ENCODE measurements at regions of chr1 and their contacts with region 1.

Region 1: DNA sequence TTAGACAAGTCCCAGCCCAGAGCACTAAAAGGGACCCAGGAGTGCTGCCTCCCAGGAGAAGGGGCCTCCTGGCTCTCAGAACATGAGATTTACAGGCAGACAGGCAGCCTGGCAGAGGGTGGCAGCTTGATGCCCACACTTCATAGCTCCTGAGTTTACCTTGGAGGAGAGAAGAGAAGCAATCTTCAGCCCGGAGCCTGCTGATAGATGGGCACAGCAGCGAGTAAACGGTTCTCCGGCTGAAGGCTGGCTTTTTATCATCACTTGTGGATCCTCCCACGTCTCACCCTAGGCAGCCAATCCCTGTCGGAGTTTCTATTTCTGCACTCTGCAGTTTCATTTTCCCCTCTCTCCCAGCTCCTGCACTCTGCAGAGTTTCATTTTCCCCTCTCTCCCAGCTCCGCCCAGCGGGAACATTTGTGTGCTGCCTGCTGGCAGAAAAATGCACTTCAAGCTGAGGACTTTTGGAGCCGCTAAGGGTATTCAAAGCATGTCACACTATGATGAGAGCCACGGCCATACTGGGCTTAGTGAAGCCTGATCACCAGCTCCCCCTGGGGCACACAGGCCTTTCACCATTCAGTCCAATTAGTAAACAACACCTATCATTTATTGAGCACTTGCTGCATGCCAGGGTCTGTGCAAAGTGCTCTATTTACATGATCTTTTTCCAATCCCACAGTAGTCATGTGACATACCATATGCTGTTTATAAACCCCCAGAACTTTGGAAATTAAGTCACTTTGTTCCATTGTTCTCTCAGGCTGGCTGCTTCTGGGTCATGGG is at the start of gene IFI6:
- DNase-seq: peak; percentile 42 to 86 (median 81)
- ATAC-seq: peak; percentile 94
- H3K4me3 ChIP-seq: peak within 1 kb of the TSS; percentile 50
- H3K4me3 Mint-ChIP-seq: peak within 1 kb of the TSS; percentile 89 to 98 (median 94)
- H3K27ac ChIP-seq: peak within 1 kb of the TSS; percentile 87
- H3K27ac Mint-ChIP-seq: peak within 1 kb of the TSS; percentile 90 to 99 (median 94)
- H3K4me1 ChIP-seq: peaks cover 21 to 23% of the 10 kb centered on the region in 2 donors
- H3K4me1 Mint-ChIP-seq: peaks cover 16 to 43% (median 41%) of the 10 kb centered on the region in 7 donors
- H3K27me3 ChIP-seq: no peaks in the 10 kb centered on the region
- H3K27me3 Mint-ChIP-seq: peaks cover 0 to 2% (median 0%) of the 10 kb centered on the region in 5 donors
- total RNA-seq, gene IFI6: 24.7 to 266 (median 33.2) TPM

Region 2: GRCh38 chr1:27097484-27097917 is 574.7 kb before region 1 on chr1:
- CTCF ChIA-PET with region 1: no interaction called
- POLR2A ChIA-PET with region 1: no interaction called
- intact Hi-C with region 1: no loop called
- DNase-seq: peak; percentile 49 to 79 (median 63)
- ATAC-seq: peak; percentile 83
- H3K4me3 ChIP-seq: no peak overlapping the region
- H3K4me3 Mint-ChIP-seq: no peak overlapping the region
- H3K27ac ChIP-seq: no peak overlapping the region
- H3K27ac Mint-ChIP-seq: no peak overlapping the region
- H3K4me1 ChIP-seq: no peaks in the 10 kb centered on the region
- H3K4me1 Mint-ChIP-seq: peaks cover 0 to 18% (median under 1%) of the 10 kb centered on the region in 7 donors
- H3K27me3 ChIP-seq: no peaks in the 10 kb centered on the region
- H3K27me3 Mint-ChIP-seq: no peaks in the 10 kb centered on the region

Region 3: DNA sequence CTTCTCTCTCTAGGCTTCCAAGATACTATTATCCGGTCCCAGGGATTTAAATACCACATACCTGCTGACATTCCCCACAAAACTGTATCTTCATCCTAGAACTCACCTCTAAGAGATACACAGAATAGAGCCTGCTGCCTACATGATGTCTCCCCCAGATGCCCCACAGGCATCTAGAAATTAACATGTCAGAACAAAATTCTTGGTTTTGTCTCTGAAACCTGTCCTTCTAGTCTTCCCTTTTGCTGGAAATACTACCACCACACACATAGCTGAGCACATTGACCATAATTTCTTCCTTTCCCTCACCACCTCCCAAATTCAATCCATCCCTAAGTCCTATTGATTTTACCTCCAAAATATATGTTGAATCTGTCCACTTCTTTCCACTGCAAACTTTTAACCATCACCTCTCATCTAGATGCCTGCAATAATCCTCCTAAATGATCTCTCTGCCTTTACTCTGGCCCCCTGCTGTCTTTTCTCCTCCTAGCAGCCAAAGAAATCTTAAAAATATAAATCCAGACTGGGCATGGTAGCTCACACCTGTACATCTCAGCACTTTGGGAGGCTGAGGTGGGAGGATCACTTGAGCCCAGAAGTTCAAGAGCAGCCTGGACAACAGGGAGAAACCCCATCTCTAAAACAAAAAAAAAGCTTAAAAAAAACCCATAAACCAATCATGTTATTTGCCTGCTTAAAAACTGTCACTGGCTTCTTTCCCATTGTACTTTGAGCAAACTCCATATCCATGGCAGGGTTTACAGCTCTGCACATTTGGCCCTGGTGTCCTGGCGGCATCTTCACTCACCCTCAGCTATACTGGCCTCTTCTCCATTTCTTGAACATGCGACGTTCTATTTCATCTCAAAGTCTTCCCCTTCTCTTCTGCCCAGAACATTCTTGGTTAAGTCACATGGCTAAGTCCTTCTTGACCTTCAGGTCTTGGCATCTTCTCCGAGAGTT is 47.4 kb after region 1 on chr1:
- CTCF ChIA-PET with region 1: interaction called, 12 read pairs
- POLR2A ChIA-PET with region 1: interaction called, 15 read pairs
- intact Hi-C with region 1: loop called in 1 of 2 experiments (anchors 1 kb)
- DNase-seq: peak in 4 of 9 donors; percentile 13 to 29 (median 14)
- ATAC-seq: peak; percentile 45
- H3K4me3 ChIP-seq: no peak overlapping the region
- H3K4me3 Mint-ChIP-seq: no peak overlapping the region
- H3K27ac ChIP-seq: no peak overlapping the region
- H3K27ac Mint-ChIP-seq: peak overlapping the region in 1 of 9 donors; percentile 28
- H3K4me1 ChIP-seq: peaks cover 0 to 2% of the 10 kb centered on the region in 2 donors
- H3K4me1 Mint-ChIP-seq: peaks cover 0 to 2% (median 1%) of the 10 kb centered on the region in 7 donors
- H3K27me3 ChIP-seq: no peaks in the 10 kb centered on the region
- H3K27me3 Mint-ChIP-seq: peaks cover 6 to 31% (median 17%) of the 10 kb centered on the region in 5 donors

Region 4: DNA sequence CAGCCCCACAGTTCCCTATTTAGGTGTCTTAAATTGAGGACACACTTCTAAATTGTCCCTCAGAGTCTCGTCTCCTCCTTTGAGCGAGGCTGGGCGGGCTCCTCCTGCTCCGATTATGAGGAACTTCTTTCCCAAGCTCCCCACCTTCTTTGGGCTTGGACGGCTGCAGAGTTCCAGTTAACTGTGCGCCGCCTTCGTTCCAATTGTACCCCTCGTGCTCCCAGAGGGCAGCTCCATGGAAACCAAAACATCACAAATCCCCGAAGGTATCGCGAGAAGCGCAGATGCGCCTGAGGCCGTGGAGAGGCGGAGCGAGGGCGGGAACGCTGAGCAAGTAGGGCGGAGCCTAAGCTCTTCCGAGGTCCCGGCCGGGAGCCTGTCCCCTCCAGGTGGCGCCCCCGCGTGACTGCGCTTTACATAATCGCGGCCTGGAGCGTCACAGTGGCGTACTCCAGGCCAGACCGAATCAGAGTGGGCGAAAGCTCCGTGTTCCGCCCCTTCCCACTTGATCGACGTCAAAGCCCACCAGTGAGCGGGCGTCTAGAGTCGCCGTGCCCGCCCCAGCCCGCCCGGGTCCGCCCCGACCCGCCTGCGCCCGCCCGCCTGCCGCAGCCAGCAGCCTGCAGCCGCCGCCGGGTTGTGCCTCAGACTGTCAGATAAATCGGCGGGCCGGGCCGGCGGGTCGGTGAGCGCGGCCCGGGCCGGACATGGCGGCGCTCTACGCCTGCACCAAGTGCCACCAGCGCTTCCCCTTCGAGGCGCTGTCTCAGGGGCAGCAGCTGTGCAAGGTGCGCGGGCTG is 53.4 kb after region 1 on chr1 and contains the start of gene FAM76A:
- CTCF ChIA-PET with region 1: interaction called, 12 read pairs
- POLR2A ChIA-PET with region 1: interaction called, 15 read pairs
- intact Hi-C with region 1: loop called (anchors 1 kb)
- DNase-seq: peak; percentile 97 to 100 (median 99)
- ATAC-seq: peak; percentile 97
- H3K4me3 ChIP-seq: peak within 1 kb of the TSS; percentile 77
- H3K4me3 Mint-ChIP-seq: peak within 1 kb of the TSS; percentile 86 to 93 (median 90)
- H3K27ac ChIP-seq: peak within 1 kb of the TSS; percentile 91
- H3K27ac Mint-ChIP-seq: peak within 1 kb of the TSS; percentile 93 to 100 (median 98)
- H3K4me1 ChIP-seq: peaks cover 7 to 17% of the 10 kb centered on the region in 2 donors
- H3K4me1 Mint-ChIP-seq: peaks cover 9 to 35% (median 28%) of the 10 kb centered on the region in 7 donors
- H3K27me3 ChIP-seq: no peaks in the 10 kb centered on the region
- H3K27me3 Mint-ChIP-seq: no peaks in the 10 kb centered on the region
- total RNA-seq, gene FAM76A: 15.2 to 25.2 (median 22.2) TPM

Region 5: DNA sequence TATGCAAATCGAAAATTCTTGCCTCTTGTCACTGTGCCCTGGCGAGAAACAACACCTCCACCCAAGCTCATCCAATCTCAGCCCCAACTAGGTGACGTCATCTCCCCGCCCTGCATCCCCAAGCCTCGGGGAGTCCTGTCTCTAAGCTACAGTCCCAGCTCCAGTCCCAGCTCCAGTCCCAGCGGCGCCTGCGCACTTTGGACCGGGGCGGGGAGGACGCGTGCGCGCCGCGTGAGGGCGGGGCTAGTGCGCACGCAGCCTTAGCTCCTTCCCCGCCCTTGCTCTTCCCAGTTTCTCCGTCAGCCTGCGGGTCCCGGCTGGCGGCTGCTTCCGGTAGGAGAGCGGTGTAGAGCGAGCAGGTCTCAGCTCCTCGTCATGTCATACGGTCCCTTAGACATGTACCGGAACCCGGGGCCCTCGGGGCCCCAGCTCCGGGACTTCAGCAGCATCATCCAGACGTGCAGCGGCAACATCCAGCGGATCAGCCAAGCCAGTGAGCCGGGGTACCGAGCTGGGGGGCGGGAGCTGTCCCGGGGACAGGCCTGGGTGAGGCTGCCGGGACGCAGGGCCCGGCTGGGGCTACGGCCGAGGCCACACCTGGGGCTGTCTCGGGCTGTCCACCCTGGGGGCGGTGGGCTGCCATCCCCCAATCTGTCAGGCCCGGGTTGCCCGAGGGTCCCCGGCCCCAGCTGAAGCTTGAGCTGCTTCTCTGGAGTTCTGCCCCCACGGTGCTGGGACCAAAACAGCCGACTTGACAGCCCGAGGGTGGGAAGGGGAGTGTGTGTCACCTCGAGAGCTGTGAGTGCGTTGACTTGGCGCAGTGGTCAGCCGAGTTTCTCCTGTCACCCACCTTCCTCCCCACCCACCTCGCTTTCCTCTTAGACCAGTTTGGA is 101.0 kb after region 1 on chr1 and contains the start of gene STX12:
- CTCF ChIA-PET with region 1: interaction called, 8 read pairs
- POLR2A ChIA-PET with region 1: interaction called, 9 read pairs
- intact Hi-C with region 1: loop called (anchors 1 kb)
- DNase-seq: peak; percentile 97 to 100 (median 98)
- ATAC-seq: peak; percentile 96
- H3K4me3 ChIP-seq: peak within 1 kb of the TSS; percentile 97
- H3K4me3 Mint-ChIP-seq: peak within 1 kb of the TSS; percentile 84 to 97 (median 94)
- H3K27ac ChIP-seq: peak within 1 kb of the TSS; percentile 94
- H3K27ac Mint-ChIP-seq: peak within 1 kb of the TSS; percentile 90 to 99 (median 96)
- H3K4me1 ChIP-seq: peaks cover 10 to 13% of the 10 kb centered on the region in 2 donors
- H3K4me1 Mint-ChIP-seq: peaks cover 26 to 43% (median 37%) of the 10 kb centered on the region in 7 donors
- H3K27me3 ChIP-seq: no peaks in the 10 kb centered on the region
- H3K27me3 Mint-ChIP-seq: no peaks in the 10 kb centered on the region
- total RNA-seq, gene STX12: 23.9 to 38.7 (median 28.9) TPM

Region 6: DNA sequence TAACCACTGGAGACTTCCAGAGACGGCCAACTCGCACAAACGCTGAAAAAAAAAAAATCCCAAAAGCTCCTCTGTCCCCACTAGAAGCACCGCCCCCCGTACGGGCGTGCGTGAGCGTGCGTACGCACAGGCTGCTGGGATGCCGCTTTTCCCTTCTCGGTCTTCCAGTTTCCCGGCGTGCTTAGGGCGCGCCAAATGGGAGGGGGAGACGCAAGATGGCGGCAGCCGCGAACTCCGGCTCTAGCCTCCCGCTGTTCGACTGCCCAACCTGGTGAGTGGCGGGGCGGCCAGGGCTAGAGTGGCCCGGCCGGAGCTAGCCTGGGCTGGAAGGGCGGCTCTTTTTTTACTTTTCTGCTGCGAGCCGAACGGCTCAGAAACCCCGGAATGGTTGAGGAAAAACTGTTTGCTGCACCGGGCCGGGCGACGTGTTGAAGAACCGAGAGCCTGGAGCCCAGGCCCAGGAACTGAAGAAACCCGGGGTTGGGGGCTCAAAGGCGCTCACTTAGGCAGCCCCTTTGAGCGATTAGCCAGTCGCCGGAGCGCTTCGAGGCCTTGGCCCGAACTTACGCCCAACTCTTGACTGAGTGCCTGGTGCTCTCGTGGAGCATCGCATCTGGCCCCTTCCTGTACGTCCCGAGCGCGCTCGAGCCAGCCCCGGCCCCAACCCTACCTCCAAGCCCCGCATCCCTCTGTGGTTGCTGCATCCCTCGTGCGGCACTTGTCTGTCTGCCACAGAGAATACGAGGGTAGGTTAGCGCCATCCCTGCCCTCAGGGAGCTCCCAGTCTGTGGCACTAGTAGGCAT is 158.7 kb after region 1 on chr1 and contains the start of gene PPP1R8:
- CTCF ChIA-PET with region 1: no interaction called
- POLR2A ChIA-PET with region 1: interaction called, 3 read pairs
- intact Hi-C with region 1: loop called (anchors 1 to 2 kb)
- DNase-seq: peak; percentile 57 to 89 (median 86)
- ATAC-seq: peak; percentile 100
- H3K4me3 ChIP-seq: peak within 1 kb of the TSS; percentile 71
- H3K4me3 Mint-ChIP-seq: peak within 1 kb of the TSS; percentile 90 to 96 (median 93)
- H3K27ac ChIP-seq: peak within 1 kb of the TSS; percentile 92
- H3K27ac Mint-ChIP-seq: peak within 1 kb of the TSS; percentile 86 to 96 (median 92)
- H3K4me1 ChIP-seq: peaks cover 16% of the 10 kb centered on the region in 2 donors
- H3K4me1 Mint-ChIP-seq: peaks cover 16 to 51% (median 38%) of the 10 kb centered on the region in 7 donors
- H3K27me3 ChIP-seq: no peaks in the 10 kb centered on the region
- H3K27me3 Mint-ChIP-seq: no peaks in the 10 kb centered on the region
- total RNA-seq, gene PPP1R8: 17.5 to 60.2 (median 39.5) TPM

Region 7: GRCh38 chr1:27979151-27979858 is 307.1 kb after region 1 on chr1:
- CTCF ChIA-PET with region 1: interaction called, 4 read pairs
- POLR2A ChIA-PET with region 1: no interaction called
- intact Hi-C with region 1: loop called in 1 of 2 experiments (anchors 5 kb)
- DNase-seq: peak in 7 of 9 donors; percentile 24 to 66 (median 53)
- ATAC-seq: peak; percentile 80
- H3K4me3 ChIP-seq: no peak overlapping the region
- H3K4me3 Mint-ChIP-seq: no peak overlapping the region
- H3K27ac ChIP-seq: no peak overlapping the region
- H3K27ac Mint-ChIP-seq: no peak overlapping the region
- H3K4me1 ChIP-seq: no peaks in the 10 kb centered on the region
- H3K4me1 Mint-ChIP-seq: peaks cover 0 to 3% (median 0%) of the 10 kb centered on the region in 7 donors
- H3K27me3 ChIP-seq: no peaks in the 10 kb centered on the region
- H3K27me3 Mint-ChIP-seq: no peaks in the 10 kb centered on the region

Measured in naive thymus-derived CD4-positive, alpha-beta T cell (primary cell).